Naive thymus-derived CD4-positive, alpha-beta T cell (primary cell): ENCODE measurements at regions of chr3 and their contacts with region 1.

Region 1: DNA sequence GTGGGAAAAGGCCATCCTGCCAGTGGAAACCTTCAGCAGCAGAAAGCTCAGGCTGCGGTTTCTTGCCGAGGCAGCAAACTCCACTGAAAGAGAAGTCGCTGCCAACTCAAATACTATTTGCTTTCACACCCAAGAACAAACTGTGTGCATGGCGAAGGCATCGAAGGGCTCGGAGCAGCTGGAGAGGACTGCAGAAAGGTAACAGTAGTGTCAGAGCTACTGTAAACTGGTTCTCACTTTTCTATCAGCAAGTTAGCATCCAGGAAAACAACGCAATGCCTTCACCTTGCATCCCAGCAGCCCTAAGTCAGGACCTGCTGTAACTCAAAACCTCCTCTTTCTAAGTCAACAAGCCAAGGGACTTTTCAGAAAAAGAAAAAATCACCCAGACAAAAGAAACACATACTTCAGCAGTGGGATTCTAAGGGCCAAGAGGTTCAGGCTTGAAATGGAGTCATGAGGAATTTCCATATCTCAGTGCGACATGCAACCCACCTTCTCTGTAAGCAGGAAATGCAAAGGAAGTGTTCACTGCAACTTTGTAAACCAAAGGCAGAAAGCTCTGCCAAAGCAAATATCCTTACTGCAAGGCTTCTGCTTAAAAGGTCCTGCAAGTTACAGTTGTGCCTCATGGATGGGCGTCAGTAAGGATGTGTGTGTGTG is 193.5 kb downstream of the FOXP1 start:
- DNase-seq: peak in 8 of 9 donors; percentile 25 to 67 (median 49)
- ATAC-seq: peak; percentile 55
- H3K4me3 ChIP-seq: peak overlapping the region; percentile 51
- H3K4me3 Mint-ChIP-seq: peak overlapping the region; percentile 68 to 88 (median 83)
- H3K27ac ChIP-seq: peak overlapping the region; percentile 81
- H3K27ac Mint-ChIP-seq: peak overlapping the region; percentile 75 to 99 (median 90)
- H3K4me1 ChIP-seq: peaks cover 29 to 74% of the 10 kb centered on the region in 2 donors
- H3K4me1 Mint-ChIP-seq: peaks cover 27 to 93% (median 83%) of the 10 kb centered on the region in 7 donors
- H3K27me3 ChIP-seq: no peaks in the 10 kb centered on the region
- H3K27me3 Mint-ChIP-seq: peaks cover 0 to 22% (median 0%) of the 10 kb centered on the region in 5 donors

Region 2: DNA sequence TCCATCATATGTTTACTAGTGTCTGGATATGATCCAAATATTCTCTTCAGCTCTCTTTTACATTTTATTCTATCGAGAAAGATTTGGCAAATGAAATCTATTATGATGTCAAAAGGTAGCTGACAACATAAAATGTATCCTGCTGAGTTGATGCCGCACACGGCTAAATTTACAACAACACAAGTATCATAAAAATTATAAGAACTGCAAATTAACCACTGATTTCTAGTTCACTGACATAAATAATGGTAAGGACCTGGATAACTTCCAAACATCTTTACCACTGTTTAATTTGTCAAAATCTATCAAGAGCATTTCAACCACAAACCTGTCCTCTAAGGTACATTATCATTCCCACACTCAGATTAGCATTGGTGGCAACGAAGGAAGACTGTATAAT is 51.0 kb before region 1 on chr3:
- CTCF ChIA-PET with region 1: no interaction called
- POLR2A ChIA-PET with region 1: no interaction called
- intact Hi-C with region 1: no loop called
- DNase-seq: no peak
- ATAC-seq: no peak
- H3K4me3 ChIP-seq: no peak overlapping the region
- H3K4me3 Mint-ChIP-seq: peak overlapping the region in 3 of 10 donors; percentile 9 to 18 (median 17)
- H3K27ac ChIP-seq: no peak overlapping the region
- H3K27ac Mint-ChIP-seq: peak overlapping the region in 7 of 9 donors; percentile 0 to 83 (median 33)
- H3K4me1 ChIP-seq: peaks cover 0 to 12% of the 10 kb centered on the region in 2 donors
- H3K4me1 Mint-ChIP-seq: peaks cover 0 to 82% (median 69%) of the 10 kb centered on the region in 7 donors
- H3K27me3 ChIP-seq: no peaks in the 10 kb centered on the region
- H3K27me3 Mint-ChIP-seq: peaks cover 0 to 2% (median 0%) of the 10 kb centered on the region in 5 donors

Region 3: GRCh38 chr3:71495708-71496472 is 105.8 kb after region 1 on chr3:
- CTCF ChIA-PET with region 1: no interaction called
- POLR2A ChIA-PET with region 1: interaction called, 9 read pairs
- intact Hi-C with region 1: loop called in 1 of 2 experiments (anchors 5 kb)
- DNase-seq: peak in 2 of 9 donors; percentile 24 to 34
- ATAC-seq: no peak
- H3K4me3 ChIP-seq: peak overlapping the region; percentile 33
- H3K4me3 Mint-ChIP-seq: peak overlapping the region; percentile 52 to 98 (median 80)
- H3K27ac ChIP-seq: peak overlapping the region; percentile 89
- H3K27ac Mint-ChIP-seq: peak overlapping the region; percentile 77 to 100 (median 98)
- H3K4me1 ChIP-seq: peaks cover 43 to 71% of the 10 kb centered on the region in 2 donors
- H3K4me1 Mint-ChIP-seq: peaks cover 54 to 90% (median 85%) of the 10 kb centered on the region in 7 donors
- H3K27me3 ChIP-seq: no peaks in the 10 kb centered on the region
- H3K27me3 Mint-ChIP-seq: no peaks in the 10 kb centered on the region

Region 4: GRCh38 chr3:71846185-71846584 is 456.1 kb after region 1 on chr3:
- CTCF ChIA-PET with region 1: no interaction called
- POLR2A ChIA-PET with region 1: no interaction called
- intact Hi-C with region 1: no loop called
- DNase-seq: no peak
- ATAC-seq: no peak
- H3K4me3 ChIP-seq: no peak overlapping the region
- H3K4me3 Mint-ChIP-seq: no peak overlapping the region
- H3K27ac ChIP-seq: no peak overlapping the region
- H3K27ac Mint-ChIP-seq: no peak overlapping the region
- H3K4me1 ChIP-seq: no peaks in the 10 kb centered on the region
- H3K4me1 Mint-ChIP-seq: no peaks in the 10 kb centered on the region
- H3K27me3 ChIP-seq: no peaks in the 10 kb centered on the region
- H3K27me3 Mint-ChIP-seq: peaks cover 5 to 50% (median 11%) of the 10 kb centered on the region in 5 donors